GM12878 (cell line): ENCODE measurements at regions of chr7 and their contacts with region 1.

Region 1: DNA sequence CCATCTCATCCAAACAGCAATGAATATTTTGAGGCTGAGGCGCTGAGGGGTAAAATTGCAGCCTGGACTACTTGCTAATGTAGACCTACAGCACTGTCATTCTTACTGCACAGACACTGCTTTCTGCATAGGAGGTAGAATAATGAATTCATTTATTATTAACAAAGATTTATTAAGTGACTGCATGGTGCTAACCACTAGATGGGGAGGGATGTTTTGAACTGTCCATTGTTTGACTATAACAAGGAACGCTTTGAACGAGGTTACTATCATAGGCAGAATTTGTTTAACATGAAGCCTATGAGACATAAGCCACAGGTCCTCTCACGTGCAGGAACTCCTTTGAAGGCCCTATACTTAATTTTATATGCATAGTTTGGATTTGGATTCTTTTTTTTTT is 143.8 kb downstream of the CFTR start:
- DNase-seq: no peak
- ATAC-seq: no peak
- H3K4me3 ChIP-seq: no peak overlapping the region
- H3K27ac ChIP-seq: no peak overlapping the region
- H3K4me1 ChIP-seq: no peaks in the 10 kb centered on the region
- H3K27me3 ChIP-seq: peaks cover 0 to 2% of the 10 kb centered on the region in 2 experiments; a peak in 1 of 4 replicates
- CTCF ChIP-seq: no peak
- EP300 ChIP-seq: no peak
- POLR2A ChIP-seq: no peak
- RAD21 ChIP-seq: no peak

Region 2: GRCh38 chr7:117538053-117538452 is 85.6 kb before region 1 on chr7:
- CTCF ChIA-PET with region 1: no interaction called
- POLR2A ChIA-PET with region 1: no interaction called
- RAD21 ChIA-PET with region 1: no interaction called
- SMC1A ChIA-PET with region 1: no interaction called
- in situ Hi-C with region 1: no loop called
- intact Hi-C with region 1: no loop called
- DNase-seq: no peak
- ATAC-seq: no peak
- H3K4me3 ChIP-seq: no peak overlapping the region
- H3K27ac ChIP-seq: no peak overlapping the region
- H3K4me1 ChIP-seq: no peaks in the 10 kb centered on the region
- H3K27me3 ChIP-seq: no peaks in the 10 kb centered on the region
- CTCF ChIP-seq: no peak
- EP300 ChIP-seq: no peak
- POLR2A ChIP-seq: no peak
- RAD21 ChIP-seq: no peak

Region 3: DNA sequence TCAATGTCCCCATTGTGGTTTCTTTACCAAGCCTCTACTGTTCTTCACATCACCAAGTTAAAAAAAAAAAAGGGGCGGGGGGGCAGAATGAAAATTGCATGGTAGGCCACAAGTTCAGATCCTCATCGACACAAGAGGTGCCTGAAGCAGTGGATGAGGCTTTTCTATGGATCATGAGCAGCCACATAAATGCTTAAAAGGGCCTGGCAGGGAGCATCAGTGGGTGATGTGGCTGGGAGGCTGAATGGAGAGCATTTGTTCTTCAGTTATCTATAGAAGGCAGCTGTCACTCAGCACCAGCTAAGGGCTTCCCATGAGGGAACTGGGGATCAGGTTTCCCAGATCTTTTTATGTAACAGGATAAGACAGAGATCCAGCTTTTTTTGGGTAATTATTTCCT is 25.9 kb before region 1 on chr7:
- CTCF ChIA-PET with region 1: no interaction called
- POLR2A ChIA-PET with region 1: no interaction called
- RAD21 ChIA-PET with region 1: no interaction called
- SMC1A ChIA-PET with region 1: no interaction called
- in situ Hi-C with region 1: no loop called
- intact Hi-C with region 1: no loop called
- DNase-seq: no peak
- ATAC-seq: no peak
- H3K4me3 ChIP-seq: no peak overlapping the region
- H3K27ac ChIP-seq: no peak overlapping the region
- H3K4me1 ChIP-seq: no peaks in the 10 kb centered on the region
- H3K27me3 ChIP-seq: no peaks in the 10 kb centered on the region
- CTCF ChIP-seq: no peak
- EP300 ChIP-seq: no peak
- POLR2A ChIP-seq: no peak
- RAD21 ChIP-seq: no peak

Region 4: GRCh38 chr7:117612642-117613041 is 11.0 kb before region 1 on chr7:
- CTCF ChIA-PET with region 1: interaction called, 6 read pairs
- POLR2A ChIA-PET with region 1: no interaction called
- RAD21 ChIA-PET with region 1: interaction called, 4 read pairs
- SMC1A ChIA-PET with region 1: interaction called, 12 read pairs
- in situ Hi-C with region 1: no loop called
- intact Hi-C with region 1: no loop called
- DNase-seq: no peak
- ATAC-seq: no peak
- H3K4me3 ChIP-seq: no peak overlapping the region
- H3K27ac ChIP-seq: no peak overlapping the region
- H3K4me1 ChIP-seq: no peaks in the 10 kb centered on the region
- H3K27me3 ChIP-seq: no peaks in the 10 kb centered on the region
- CTCF ChIP-seq: no peak
- EP300 ChIP-seq: no peak
- POLR2A ChIP-seq: no peak
- RAD21 ChIP-seq: no peak